ENCODE measurements at regions of chr17 and their contacts with region 1.

Region 1: DNA sequence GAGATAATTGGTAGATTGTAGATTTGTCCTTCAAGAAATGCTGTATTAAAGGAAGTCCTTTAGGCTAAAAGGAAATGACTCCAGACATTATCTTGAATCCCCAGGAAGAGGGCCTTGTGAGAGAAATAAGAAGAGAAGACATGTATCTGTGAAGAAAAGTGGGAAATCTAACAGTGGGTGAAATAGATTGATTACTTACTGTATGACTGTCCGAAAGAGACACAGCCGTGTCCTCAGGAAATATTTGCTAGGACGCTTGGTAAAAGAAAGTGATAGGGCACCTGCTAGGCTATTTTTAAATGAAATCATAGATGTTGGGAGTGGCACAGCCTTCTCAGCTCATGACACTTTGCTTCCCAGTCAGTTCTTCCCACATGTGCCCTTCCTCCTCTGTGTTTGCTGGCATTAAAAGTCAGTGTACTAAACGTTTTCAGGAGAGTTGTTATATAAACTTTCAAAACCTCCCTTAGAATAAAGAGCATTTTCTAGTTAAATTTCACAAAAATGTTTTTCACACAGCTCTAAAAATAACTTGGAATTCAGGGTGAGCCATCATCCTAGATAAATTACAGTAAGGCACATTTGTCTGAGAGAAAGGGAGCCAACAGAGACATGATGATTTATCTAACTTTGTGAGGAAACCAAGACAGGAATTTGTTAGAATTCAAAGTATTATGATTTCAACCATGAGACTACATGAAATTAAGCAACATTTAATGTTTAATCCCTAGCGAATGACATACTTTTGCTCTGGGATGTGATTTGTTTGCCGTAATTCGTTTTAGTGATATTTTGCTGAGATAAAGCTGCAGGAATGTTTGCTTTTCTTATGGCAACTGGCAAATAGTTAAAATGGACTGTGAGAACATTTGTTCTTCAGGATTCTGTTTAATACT is 35.0 kb downstream of the DHRS7B start:
- DNase-seq: no peak
- ATAC-seq: peak; percentile 78 to 81 (median 79)
- H3K4me3 ChIP-seq: peak overlapping the region; percentile 61
- H3K27ac ChIP-seq: peak overlapping the region; percentile 96
- H3K4me1 ChIP-seq: peaks cover 50% of the 10 kb centered on the region
- H3K27me3 ChIP-seq: no peaks in the 10 kb centered on the region
- CTCF ChIP-seq: no peak

Region 2: GRCh38 chr17:21126645-21127510 is 34.9 kb before region 1 on chr17 and contains the start of gene DHRS7B:
- intact Hi-C with region 1: loop called in 1 of 2 experiments (anchors 5 kb)
- DNase-seq: peak; percentile 95 to 98
- ATAC-seq: peak; percentile 93 to 96 (median 95)
- H3K4me3 ChIP-seq: peak within 1 kb of the TSS; percentile 93
- H3K27ac ChIP-seq: peak within 1 kb of the TSS; percentile 98
- H3K4me1 ChIP-seq: peaks cover 37% of the 10 kb centered on the region
- H3K27me3 ChIP-seq: no peaks in the 10 kb centered on the region
- CTCF ChIP-seq: no peak
- total RNA-seq, gene DHRS7B: 15.7 to 50.1 (median 37.7) TPM

Measured in psoas muscle (tissue), 8 donors.